ENCODE measurements at regions of chr15 and their contacts with region 1.

Region 1: GRCh38 chr15:91942676-91943576 is 89.4 kb downstream of the SLCO3A1 start:
- DNase-seq: peak; percentile 88
- H3K4me3 Mint-ChIP-seq: peak overlapping the region; percentile 72
- H3K27ac Mint-ChIP-seq: peak overlapping the region; percentile 90
- H3K4me1 Mint-ChIP-seq: peaks cover 98% of the 10 kb centered on the region
- H3K27me3 Mint-ChIP-seq: no peaks in the 10 kb centered on the region
- CTCF ChIP-seq: no peak

Region 2: GRCh38 chr15:91302588-91303439 is 640.1 kb before region 1 on chr15:
- CTCF ChIA-PET with region 1: no interaction called
- intact Hi-C with region 1: loop called (anchors 5 kb)
- DNase-seq: peak; percentile 56
- H3K4me3 Mint-ChIP-seq: no peak overlapping the region
- H3K27ac Mint-ChIP-seq: no peak overlapping the region
- H3K4me1 Mint-ChIP-seq: no peaks in the 10 kb centered on the region
- H3K27me3 Mint-ChIP-seq: peaks cover 24% of the 10 kb centered on the region
- CTCF ChIP-seq: peak; percentile 68

Region 3: GRCh38 chr15:91535856-91536500 is 406.9 kb before region 1 on chr15:
- CTCF ChIA-PET with region 1: no interaction called
- intact Hi-C with region 1: loop called (anchors 10 kb)
- DNase-seq: no peak
- H3K4me3 Mint-ChIP-seq: peak overlapping the region; percentile 37
- H3K27ac Mint-ChIP-seq: peak overlapping the region; percentile 91
- H3K4me1 Mint-ChIP-seq: peaks cover 75% of the 10 kb centered on the region
- H3K27me3 Mint-ChIP-seq: no peaks in the 10 kb centered on the region
- CTCF ChIP-seq: no peak

Region 4: DNA sequence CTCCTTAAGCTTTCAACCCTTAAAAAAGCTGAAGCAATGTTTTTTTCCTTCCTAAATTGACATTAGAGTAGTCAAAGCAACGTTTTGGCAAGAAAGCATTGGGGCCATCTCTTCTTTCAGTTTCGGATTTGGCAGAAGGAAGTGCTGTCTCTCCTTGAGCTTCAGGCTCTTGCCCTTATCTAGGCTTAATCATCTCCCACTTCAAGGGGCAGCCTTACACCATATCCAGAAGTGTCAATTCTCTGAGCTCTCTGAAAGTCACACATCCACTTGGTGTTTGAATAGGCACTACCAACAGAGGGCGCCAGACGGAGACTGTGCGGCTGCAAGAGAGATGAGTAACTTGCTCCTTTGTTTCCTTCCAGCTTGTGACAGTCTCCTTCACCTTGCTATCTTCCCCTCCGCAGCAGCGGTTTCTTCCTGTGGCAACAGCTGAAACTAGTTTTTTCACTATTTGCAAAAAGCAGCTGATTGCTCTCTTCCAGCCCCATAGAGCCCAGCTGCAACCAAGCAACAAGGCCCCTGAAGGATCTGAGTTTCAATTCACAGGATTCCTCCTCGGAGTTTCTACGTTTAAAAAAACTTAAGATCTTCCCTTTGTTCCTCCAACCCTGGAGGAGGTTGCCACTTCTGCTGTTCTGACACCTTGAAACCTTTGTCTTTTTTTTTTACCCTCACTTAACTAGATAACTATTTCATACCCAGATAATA is 236.4 kb before region 1 on chr15:
- CTCF ChIA-PET with region 1: interaction called, 16 read pairs
- intact Hi-C with region 1: loop called (anchors 5 kb)
- DNase-seq: peak; percentile 85
- H3K4me3 Mint-ChIP-seq: no peak overlapping the region
- H3K27ac Mint-ChIP-seq: no peak overlapping the region
- H3K4me1 Mint-ChIP-seq: no peaks in the 10 kb centered on the region
- H3K27me3 Mint-ChIP-seq: no peaks in the 10 kb centered on the region
- CTCF ChIP-seq: peak; percentile 87

Region 5: DNA sequence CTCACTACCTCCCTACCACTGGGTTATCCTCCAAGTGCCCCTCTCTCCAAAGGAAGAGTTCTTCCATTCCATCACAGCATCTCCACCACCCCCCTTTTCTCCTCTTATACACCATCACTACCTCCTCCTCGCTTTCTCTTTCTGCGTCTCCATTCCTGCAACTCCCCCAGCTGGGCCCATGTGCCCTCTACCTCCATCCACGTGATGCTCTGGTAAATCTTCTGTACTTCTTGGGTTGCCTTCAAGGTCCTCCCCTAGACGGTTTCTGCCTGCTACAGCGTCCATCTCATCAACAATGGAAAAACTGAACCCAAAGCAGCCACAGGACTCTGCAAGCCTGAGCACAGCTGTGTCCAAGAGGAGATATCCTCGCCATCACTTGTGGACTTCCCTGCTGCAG is 219.0 kb before region 1 on chr15:
- CTCF ChIA-PET with region 1: no interaction called
- intact Hi-C with region 1: no loop called
- DNase-seq: no peak
- H3K4me3 Mint-ChIP-seq: no peak overlapping the region
- H3K27ac Mint-ChIP-seq: no peak overlapping the region
- H3K4me1 Mint-ChIP-seq: no peaks in the 10 kb centered on the region
- H3K27me3 Mint-ChIP-seq: peaks cover 49% of the 10 kb centered on the region
- CTCF ChIP-seq: no peak

Region 6: DNA sequence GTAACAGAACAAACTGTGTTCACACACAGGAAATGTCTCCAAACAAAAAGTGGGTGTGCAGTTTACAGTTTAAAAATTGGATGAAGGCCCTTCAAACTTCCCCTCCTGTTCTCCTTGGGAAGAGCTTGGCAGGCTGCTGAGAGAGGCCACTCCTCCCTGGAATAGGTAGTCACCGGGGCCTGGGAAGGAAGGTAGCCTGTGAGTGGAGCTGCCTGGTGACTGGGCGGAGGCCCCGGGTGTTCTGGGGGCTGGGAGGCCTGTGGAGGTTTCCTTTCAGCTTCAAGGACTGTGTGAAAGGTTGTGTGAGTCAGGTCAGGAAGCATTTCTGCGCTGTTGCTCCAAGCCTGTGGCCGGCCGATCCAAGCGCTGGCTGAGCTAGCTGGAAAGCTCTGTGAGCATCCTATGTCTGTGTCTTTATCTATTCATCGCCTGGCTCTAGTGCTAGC is 75.3 kb before region 1 on chr15:
- CTCF ChIA-PET with region 1: interaction called, 28 read pairs
- intact Hi-C with region 1: loop called (anchors 2 kb)
- DNase-seq: peak; percentile 94
- H3K4me3 Mint-ChIP-seq: peak overlapping the region; percentile 46
- H3K27ac Mint-ChIP-seq: peak overlapping the region; percentile 79
- H3K4me1 Mint-ChIP-seq: peaks cover 77% of the 10 kb centered on the region
- H3K27me3 Mint-ChIP-seq: no peaks in the 10 kb centered on the region
- CTCF ChIP-seq: no peak

Region 7: DNA sequence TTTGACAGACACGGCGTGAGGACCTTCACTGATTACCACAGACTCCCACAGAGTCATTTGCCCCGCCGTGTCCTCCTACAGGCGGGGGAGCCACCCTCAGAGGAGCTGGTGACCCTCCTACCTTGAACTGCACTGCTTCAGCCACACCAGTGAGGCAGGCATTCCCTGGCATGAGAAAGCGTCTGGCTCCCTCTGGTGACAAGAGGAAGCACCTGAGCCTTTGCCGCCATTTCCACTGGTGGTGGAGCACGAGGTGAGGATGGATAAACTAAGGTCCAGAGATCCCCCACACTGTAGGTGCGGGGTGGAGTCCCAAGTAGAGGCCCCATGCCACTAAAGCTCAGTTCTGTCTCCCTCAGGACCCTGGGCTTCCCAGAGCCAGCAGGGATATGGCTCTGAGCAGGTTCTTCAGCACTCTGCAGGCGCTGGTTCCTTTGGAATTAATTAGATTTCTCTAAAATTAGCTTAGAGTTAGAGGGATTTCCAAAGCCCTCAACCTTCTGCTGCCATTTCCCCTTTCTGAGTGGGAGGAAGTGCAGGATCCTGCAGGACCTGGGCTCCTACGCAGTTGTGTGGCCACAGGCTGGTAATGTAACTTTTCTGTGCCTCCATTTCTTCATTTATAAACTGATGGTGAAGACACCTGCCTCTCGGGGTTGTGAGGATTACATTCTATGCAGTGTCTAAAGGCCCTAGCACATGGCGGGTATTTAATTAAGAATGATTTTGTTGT is 134.6 kb after region 1 on chr15:
- CTCF ChIA-PET with region 1: interaction called, 4 read pairs
- intact Hi-C with region 1: loop called (anchors 1 kb)
- DNase-seq: peak; percentile 83
- H3K4me3 Mint-ChIP-seq: no peak overlapping the region
- H3K27ac Mint-ChIP-seq: no peak overlapping the region
- H3K4me1 Mint-ChIP-seq: peaks cover 35% of the 10 kb centered on the region
- H3K27me3 Mint-ChIP-seq: no peaks in the 10 kb centered on the region
- CTCF ChIP-seq: peak; percentile 77

Measured in Calu3 (cell line).